CD4-positive, alpha-beta memory T cell (primary cell): ENCODE measurements at regions of chr6 and their contacts with region 1.

Region 1: DNA sequence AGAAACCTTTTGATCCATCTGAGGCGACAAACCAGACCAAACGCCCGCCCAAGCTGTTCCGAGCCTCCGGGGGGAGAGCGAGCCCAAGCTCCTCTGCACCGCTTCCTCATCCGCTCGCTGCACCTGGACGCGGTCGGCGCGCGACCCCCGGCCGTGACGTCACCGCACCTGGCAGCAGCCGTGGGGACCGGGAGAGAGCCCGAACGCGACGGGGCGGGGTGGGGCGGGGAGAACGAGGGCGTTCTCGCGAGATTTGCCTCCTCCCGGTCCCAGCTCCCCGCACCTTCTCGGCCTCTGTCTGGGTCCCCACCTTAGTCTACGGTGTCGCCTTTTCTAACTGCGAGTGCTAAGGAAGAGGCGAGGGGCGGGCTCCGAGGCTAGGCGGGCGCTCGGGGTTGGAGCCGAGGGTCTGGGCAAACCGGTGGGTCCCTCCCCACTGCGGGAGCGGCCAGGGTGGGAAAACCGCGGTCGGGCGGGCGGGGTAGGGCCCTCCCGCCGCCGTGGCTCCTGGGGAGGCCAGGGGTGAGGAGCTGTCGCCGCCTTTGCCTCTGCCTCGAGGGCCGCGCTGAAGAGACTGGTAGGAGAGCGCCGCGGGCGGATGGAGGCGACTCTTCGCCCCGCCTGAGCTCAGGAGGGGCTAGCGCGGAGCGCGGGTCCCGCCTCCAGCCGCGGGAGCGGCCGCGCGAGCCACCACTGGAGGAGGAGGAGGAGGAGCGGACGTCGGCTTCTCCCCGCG is at the start of gene CD2AP:
- DNase-seq: peak; percentile 90 to 94 (median 92)
- H3K4me3 ChIP-seq: peak within 1 kb of the TSS; percentile 74 to 88
- H3K4me3 Mint-ChIP-seq: peak within 1 kb of the TSS; percentile 92 to 100 (median 97)
- H3K27ac ChIP-seq: peak within 1 kb of the TSS; percentile 89
- H3K27ac Mint-ChIP-seq: peak within 1 kb of the TSS; percentile 96 to 99 (median 98)
- H3K4me1 ChIP-seq: peaks cover 36% of the 10 kb centered on the region
- H3K4me1 Mint-ChIP-seq: peaks cover 22 to 47% (median 33%) of the 10 kb centered on the region in 4 donors
- H3K27me3 ChIP-seq: no peaks in the 10 kb centered on the region
- H3K27me3 Mint-ChIP-seq: no peaks in the 10 kb centered on the region
- total RNA-seq, gene CD2AP: 25.7 to 25.8 TPM

Region 2: GRCh38 chr6:47135772-47136171 is 341.9 kb before region 1 on chr6:
- CTCF ChIA-PET with region 1: no interaction called
- POLR2A ChIA-PET with region 1: no interaction called
- intact Hi-C with region 1: no loop called
- DNase-seq: no peak
- H3K4me3 ChIP-seq: no peak overlapping the region
- H3K4me3 Mint-ChIP-seq: no peak overlapping the region
- H3K27ac ChIP-seq: no peak overlapping the region
- H3K27ac Mint-ChIP-seq: no peak overlapping the region
- H3K4me1 ChIP-seq: no peaks in the 10 kb centered on the region
- H3K4me1 Mint-ChIP-seq: no peaks in the 10 kb centered on the region
- H3K27me3 ChIP-seq: no peaks in the 10 kb centered on the region
- H3K27me3 Mint-ChIP-seq: peaks cover 1 to 6% of the 10 kb centered on the region in 2 donors

Region 3: GRCh38 chr6:47428746-47429664 is 48.7 kb before region 1 on chr6:
- CTCF ChIA-PET with region 1: no interaction called
- POLR2A ChIA-PET with region 1: no interaction called
- intact Hi-C with region 1: no loop called
- DNase-seq: no peak
- H3K4me3 ChIP-seq: no peak overlapping the region
- H3K4me3 Mint-ChIP-seq: no peak overlapping the region
- H3K27ac ChIP-seq: no peak overlapping the region
- H3K27ac Mint-ChIP-seq: no peak overlapping the region
- H3K4me1 ChIP-seq: no peaks in the 10 kb centered on the region
- H3K4me1 Mint-ChIP-seq: no peaks in the 10 kb centered on the region
- H3K27me3 ChIP-seq: no peaks in the 10 kb centered on the region
- H3K27me3 Mint-ChIP-seq: peaks cover 0 to 2% of the 10 kb centered on the region in 2 donors

Region 4: GRCh38 chr6:47669684-47670513 is 192.2 kb after region 1 on chr6:
- CTCF ChIA-PET with region 1: no interaction called
- POLR2A ChIA-PET with region 1: no interaction called
- intact Hi-C with region 1: no loop called
- DNase-seq: no peak
- H3K4me3 ChIP-seq: no peak overlapping the region
- H3K4me3 Mint-ChIP-seq: no peak overlapping the region
- H3K27ac ChIP-seq: no peak overlapping the region
- H3K27ac Mint-ChIP-seq: no peak overlapping the region
- H3K4me1 ChIP-seq: no peaks in the 10 kb centered on the region
- H3K4me1 Mint-ChIP-seq: no peaks in the 10 kb centered on the region
- H3K27me3 ChIP-seq: no peaks in the 10 kb centered on the region
- H3K27me3 Mint-ChIP-seq: peaks cover 16 to 26% of the 10 kb centered on the region in 2 donors

Region 5: DNA sequence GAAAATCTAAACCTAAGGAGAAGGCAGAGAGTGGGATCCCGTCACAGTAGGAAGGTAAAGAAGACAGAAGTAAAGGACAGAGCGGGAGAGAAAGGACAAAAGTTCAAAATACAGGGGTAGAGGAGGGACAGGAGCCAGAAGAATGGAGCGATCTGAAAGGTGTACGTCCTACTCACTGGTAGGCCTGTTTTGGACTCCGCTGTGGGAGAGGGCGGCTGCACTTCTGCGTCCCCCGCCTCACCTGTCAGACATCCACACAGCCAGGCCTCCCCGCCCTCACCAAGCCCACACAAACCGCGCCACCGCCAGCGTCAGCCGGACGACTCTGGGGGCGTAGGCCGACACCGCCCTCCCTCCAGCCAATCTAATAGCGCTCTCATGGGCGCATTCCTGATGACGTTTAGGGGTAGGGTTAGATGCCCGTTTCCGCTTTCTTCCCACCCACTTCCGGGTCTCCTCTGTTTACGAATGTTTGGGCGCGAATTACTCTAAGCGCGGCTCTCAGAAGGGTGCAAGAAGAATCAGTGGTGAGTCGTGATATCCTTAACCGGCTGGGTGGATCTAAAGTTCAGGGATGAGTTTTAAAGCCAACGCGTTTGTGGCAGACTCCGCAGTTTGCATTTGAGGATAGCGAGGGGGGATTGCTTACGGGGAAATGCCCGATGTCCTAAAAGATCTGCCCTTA is 1985.4 kb after region 1 on chr6 and contains the starts of genes CENPQ and MMUT:
- CTCF ChIA-PET with region 1: no interaction called
- POLR2A ChIA-PET with region 1: interaction called, 3 read pairs
- intact Hi-C with region 1: loop called (anchors 2 kb)
- DNase-seq: peak; percentile 92 to 94 (median 94)
- H3K4me3 ChIP-seq: peak within 1 kb of the TSS; percentile 68 to 91
- H3K4me3 Mint-ChIP-seq: peak within 1 kb of the TSS; percentile 94 to 99 (median 98)
- H3K27ac ChIP-seq: peak within 1 kb of the TSS; percentile 76
- H3K27ac Mint-ChIP-seq: peak within 1 kb of the TSS; percentile 87 to 99 (median 98)
- H3K4me1 ChIP-seq: peaks cover 26% of the 10 kb centered on the region
- H3K4me1 Mint-ChIP-seq: peaks cover 25 to 60% (median 42%) of the 10 kb centered on the region in 4 donors
- H3K27me3 ChIP-seq: no peaks in the 10 kb centered on the region
- H3K27me3 Mint-ChIP-seq: no peaks in the 10 kb centered on the region
- total RNA-seq, gene CENPQ: 5.2 to 5.8 TPM
- total RNA-seq, gene MMUT: 14.5 to 15.4 TPM